ENCODE measurements at regions of chr9 and their contacts with region 1.

Region 1: DNA sequence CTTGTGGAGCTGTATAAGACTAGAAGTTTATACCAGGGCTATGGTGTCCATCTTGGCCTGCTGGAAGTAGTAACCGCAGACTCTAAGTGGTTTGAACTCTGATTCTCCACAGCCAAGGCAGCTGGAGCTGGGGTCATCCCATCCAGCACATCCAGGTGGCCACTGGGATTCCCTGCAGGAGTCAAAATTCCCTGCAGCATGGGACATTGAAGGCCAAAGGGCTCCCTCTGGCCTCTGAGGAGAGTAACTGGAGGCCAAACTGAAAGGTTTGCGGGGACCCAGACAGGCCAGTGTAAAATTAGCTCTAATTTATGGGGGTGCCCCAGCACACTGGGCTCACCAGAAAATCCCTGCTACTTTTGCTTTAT is 12.2 kb upstream of the PRXL2C start:
- DNase-seq: no peak
- H3K4me3 ChIP-seq: no peak overlapping the region
- H3K27ac ChIP-seq: no peak overlapping the region
- H3K4me1 ChIP-seq: no peaks in the 10 kb centered on the region
- H3K27me3 ChIP-seq: no peaks in the 10 kb centered on the region; the same call in 1 of the 2 replicates

Region 2: DNA sequence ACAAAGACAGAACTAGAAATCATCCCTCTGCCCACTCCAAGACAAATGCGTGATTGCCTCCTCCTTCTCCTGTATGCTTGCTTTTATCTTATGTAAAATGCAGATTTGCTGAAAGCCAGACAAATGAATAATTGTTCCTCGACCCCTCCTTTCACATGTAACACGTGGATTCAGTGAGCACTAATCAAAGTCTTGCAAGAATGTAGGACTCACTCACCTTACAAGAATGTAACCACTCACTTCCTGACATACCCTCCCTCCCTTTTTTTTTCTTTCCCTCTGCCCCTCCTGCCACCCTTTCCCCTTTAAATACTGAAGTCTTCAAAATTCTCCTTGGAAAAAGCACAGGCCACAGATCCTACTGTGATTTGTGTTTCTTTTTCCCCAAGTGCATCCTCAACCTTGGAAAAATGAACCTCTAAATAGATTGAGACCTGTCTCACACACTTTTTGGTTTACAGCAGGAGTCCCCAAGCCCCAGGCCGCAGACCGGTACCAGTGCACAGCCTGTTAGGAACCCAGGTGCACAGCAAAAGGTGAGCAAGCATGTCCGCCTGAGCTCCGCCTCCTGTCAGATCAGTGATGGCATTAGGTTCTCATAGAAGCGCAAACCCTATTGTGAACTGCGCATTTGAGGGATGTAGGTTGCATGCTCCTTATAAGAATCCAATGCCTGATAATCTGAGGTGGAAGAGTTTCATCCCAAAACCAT is 336.0 kb before region 1 on chr9:
- in situ Hi-C with region 1: loop called (anchors 5 kb)
- DNase-seq: peak; percentile 8
- H3K4me3 ChIP-seq: no peak overlapping the region
- H3K27ac ChIP-seq: no peak overlapping the region
- H3K4me1 ChIP-seq: 0 out of 2 replicates have a peak, but pooled peaks cover 6% of the 10 kb centered on the region
- H3K27me3 ChIP-seq: peaks cover 1% of the 10 kb centered on the region

Region 3: GRCh38 chr9:96502539-96503373 is 164.6 kb before region 1 on chr9:
- in situ Hi-C with region 1: no loop called
- DNase-seq: peak; percentile 47
- H3K4me3 ChIP-seq: no peak overlapping the region
- H3K27ac ChIP-seq: peak overlapping the region; percentile 33
- H3K4me1 ChIP-seq: peaks cover 26% of the 10 kb centered on the region
- H3K27me3 ChIP-seq: no peaks in the 10 kb centered on the region